K562 (cell line): ENCODE measurements at regions of chr10 and their contacts with region 1.

Region 1: GRCh38 chr10:2978111-2978510 is 89.2 kb upstream of the PFKP start:
- DNase-seq: peak in 2 of 4 experiments; percentile 28 to 30
- ATAC-seq: peak; percentile 71
- H3K4me3 ChIP-seq: no peak overlapping the region
- H3K27ac ChIP-seq: no peak overlapping the region
- H3K4me1 ChIP-seq: peaks cover 2 to 7% of the 10 kb centered on the region in 2 experiments; a peak in 2 of 5 replicates
- H3K27me3 ChIP-seq: peaks cover 0 to 21% of the 10 kb centered on the region in 2 experiments; a peak in 3 of 5 replicates
- CTCF ChIP-seq: peak; percentile 48 to 71 (median 51); a peak in 5 of 6 replicates
- EP300 ChIP-seq: no peak
- POLR2A ChIP-seq: no peak
- RAD21 ChIP-seq: peak; percentile 34 to 76; a peak in 3 of 4 replicates

Region 2: GRCh38 chr10:1911771-1912170 is 1066.3 kb before region 1 on chr10:
- CTCF ChIA-PET with region 1: no interaction called
- POLR2A ChIA-PET with region 1: no interaction called
- in situ Hi-C with region 1: no loop called
- intact Hi-C with region 1: no loop called
- DNase-seq: no peak
- ATAC-seq: no peak
- H3K4me3 ChIP-seq: no peak overlapping the region
- H3K27ac ChIP-seq: no peak overlapping the region
- H3K4me1 ChIP-seq: no peaks in the 10 kb centered on the region
- H3K27me3 ChIP-seq: no peaks in the 10 kb centered on the region
- CTCF ChIP-seq: no peak
- EP300 ChIP-seq: no peak
- POLR2A ChIP-seq: no peak
- RAD21 ChIP-seq: no peak

Region 3: GRCh38 chr10:2927958-2928840 is 49.9 kb before region 1 on chr10:
- CTCF ChIA-PET with region 1: no interaction called
- POLR2A ChIA-PET with region 1: no interaction called
- in situ Hi-C with region 1: no loop called
- intact Hi-C with region 1: loop called (anchors 5 kb)
- DNase-seq: peak; percentile 75 to 81 (median 77)
- ATAC-seq: peak; percentile 95
- H3K4me3 ChIP-seq: no peak overlapping the region
- H3K27ac ChIP-seq: no peak overlapping the region
- H3K4me1 ChIP-seq: no peaks in the 10 kb centered on the region
- H3K27me3 ChIP-seq: peaks cover 22 to 49% of the 10 kb centered on the region in 2 experiments; a peak in 4 of 5 replicates
- CTCF ChIP-seq: peak; percentile 74 to 82 (median 77)
- EP300 ChIP-seq: no peak
- POLR2A ChIP-seq: no peak
- RAD21 ChIP-seq: peak; percentile 54 to 79

Region 4: DNA sequence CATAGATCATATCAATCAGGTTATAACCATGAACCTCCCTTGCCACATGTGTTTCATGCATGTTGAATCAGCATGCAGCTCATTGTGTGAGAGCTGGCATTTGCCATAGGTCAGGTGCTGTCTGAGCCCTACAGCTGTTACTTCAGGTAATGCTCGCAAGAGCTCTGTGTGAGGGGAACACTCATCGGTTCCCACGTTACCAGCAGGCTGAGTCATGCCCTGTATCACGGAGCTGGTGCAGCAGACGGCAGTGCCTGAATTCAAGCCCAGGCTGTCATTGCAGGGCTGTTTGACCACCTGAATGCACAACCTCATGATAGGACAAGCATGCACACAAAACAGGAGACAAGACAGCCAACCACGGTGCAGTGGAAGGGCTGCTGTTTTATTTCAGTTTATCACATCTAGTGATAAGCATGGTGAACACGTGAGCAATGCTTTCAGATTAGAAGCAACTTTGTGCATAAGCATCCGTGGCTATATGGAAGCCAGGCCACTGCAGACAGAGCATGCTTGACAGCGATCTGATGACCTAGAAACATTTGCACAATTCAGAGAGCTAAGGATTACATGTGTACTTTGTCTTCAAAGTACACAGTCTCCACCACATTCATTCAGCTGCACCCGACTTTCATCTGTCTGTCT is 32.8 kb after region 1 on chr10:
- CTCF ChIA-PET with region 1: no interaction called
- POLR2A ChIA-PET with region 1: no interaction called
- in situ Hi-C with region 1: no loop called
- intact Hi-C with region 1: no loop called
- DNase-seq: no peak
- ATAC-seq: no peak
- H3K4me3 ChIP-seq: no peak overlapping the region
- H3K27ac ChIP-seq: no peak overlapping the region
- H3K4me1 ChIP-seq: no peaks in the 10 kb centered on the region
- H3K27me3 ChIP-seq: peaks cover 41 to 54% of the 10 kb centered on the region in 2 experiments; a peak in 4 of 5 replicates
- CTCF ChIP-seq: no peak
- EP300 ChIP-seq: no peak
- POLR2A ChIP-seq: no peak
- RAD21 ChIP-seq: no peak